ENCODE measurements at regions of chr10 and their contacts with region 1.

Region 1: GRCh38 chr10:17228091-17228940 is at the start of gene VIM:
- DNase-seq: peak; percentile 92
- ATAC-seq: peak; percentile 81
- total RNA-seq, gene VIM: 447 TPM

Region 2: DNA sequence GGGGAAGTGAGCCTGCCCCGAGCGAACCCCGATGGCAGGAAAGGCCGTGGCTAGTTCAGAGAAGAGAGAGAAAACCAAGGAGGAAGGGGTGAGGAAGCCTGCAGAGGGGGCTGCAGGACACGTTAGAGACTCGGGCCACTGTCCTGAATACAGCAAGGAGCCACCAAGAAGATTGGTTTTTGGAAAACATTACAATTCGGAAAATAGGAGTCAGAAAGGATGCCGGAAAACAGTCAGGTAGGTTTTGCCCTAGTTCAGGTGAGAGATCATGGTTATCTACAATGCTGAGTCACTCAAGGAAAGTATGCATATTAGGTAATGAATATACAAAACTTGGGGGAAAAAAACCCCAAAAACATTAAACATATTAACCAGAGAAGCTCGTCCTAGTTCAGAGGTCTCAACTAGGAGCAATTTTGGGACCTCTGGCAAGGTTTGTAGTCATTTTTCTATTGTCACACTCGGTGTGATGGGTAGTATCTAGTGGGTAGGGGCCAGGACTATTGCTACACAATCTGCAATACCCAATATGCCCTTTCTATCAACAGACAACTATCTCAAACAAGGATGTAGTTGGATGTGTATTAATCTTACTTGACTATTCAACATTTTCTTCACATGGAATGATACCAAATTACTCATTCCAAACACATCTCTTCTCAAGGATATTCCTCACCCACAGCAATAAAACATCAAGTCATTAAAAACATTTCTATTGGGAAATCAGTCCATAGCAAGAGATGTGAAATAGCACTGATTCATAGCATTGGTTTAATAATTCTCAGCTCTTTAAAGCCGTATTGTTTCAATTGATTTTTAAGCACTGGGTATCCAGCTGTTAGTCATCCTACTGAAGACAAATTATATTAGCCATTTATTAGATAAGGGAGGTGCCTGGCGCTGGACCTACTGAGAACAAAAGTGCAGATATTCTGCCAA is 336.7 kb before region 1 on chr10:
- intact Hi-C with region 1: loop called (anchors 2 kb)
- DNase-seq: peak; percentile 78
- ATAC-seq: peak; percentile 96

Region 3: DNA sequence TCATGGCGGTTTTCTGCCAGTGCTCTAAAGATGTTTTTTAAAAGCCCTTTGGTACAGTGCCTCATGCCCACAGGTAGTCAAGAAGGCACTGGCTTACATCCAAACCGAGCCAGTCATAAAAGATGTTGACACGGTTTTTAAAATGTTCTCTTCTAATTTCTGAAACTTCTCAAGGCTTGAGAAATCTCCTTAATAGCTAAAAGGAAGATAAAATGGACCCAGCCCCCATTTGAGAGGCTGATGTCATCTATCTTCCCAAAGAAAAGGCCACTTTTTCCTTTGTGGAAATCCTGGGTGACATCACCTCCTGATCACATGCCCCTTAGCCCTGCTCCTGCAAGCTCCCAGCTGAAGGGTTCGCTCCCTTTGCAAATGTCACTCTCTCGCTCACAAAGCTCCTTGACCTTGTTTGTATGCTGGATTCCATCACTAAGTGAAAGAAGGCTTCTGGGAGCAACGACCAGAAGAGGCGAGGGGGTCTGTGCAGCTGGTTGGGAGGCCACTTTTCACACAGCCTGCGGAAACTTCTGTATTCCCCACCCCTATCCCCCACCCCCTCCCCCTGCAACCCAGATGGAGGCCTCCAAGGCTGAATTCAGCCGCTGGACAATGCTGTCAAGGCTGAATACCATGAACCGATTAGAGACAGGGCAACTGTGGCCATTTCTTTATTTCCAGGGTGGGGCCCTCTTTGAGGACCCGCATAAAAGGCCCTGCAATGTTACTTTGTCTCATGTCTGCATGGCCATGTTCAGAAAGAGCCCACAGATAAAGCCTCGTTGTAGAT is 221.5 kb before region 1 on chr10:
- intact Hi-C with region 1: loop called (anchors 5 kb)
- DNase-seq: no peak
- ATAC-seq: no peak

Region 4: GRCh38 chr10:17029581-17030271 is 198.6 kb before region 1 on chr10:
- intact Hi-C with region 1: loop called (anchors 5 kb)
- DNase-seq: peak; percentile 87
- ATAC-seq: peak; percentile 90

Region 5: DNA sequence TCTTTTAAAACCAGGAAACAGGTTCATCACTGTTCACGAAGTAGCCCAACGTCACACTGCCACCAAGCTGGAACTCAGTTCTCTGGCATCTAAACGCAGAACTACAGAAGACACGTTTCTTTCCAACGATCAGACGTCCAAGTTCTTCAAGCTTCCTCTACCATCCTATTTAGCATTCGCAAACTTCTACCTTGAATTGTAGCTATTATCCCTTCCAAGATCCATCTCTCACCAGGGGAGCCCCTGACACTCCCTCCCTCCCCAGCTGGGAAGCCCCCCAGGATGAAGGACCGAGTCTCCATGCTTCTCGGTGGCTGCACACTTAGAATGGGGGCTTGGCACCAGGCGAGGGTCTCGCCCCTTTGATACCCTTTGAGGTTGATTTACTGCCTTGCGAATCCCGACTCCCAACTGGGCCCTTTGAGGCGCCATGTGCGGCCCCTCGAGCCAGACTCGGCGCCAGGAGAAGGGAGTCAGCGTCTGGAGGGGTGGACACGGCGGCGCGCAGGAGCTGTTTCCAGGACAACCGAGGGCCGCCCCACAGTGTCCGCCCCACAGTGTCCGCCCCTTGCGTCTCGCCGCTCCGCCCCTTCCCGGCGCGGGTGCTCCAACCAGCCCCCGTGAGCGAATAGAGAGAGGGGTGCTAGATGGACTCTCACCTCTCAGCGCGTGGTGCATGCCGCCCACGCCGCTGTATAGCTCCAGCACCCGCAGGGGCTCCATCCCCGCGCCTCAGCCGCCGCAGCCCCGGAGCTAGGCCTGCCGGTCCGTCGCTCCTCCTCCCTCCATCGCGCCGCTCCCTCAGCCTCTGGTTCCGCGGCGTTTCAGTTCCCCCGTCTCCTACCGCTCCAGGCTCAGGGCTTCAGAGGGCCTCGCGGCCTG is 27.2 kb before region 1 on chr10 and contains the start of gene TRDMT1:
- intact Hi-C with region 1: loop called (anchors 2 kb)
- DNase-seq: peak; percentile 94
- ATAC-seq: peak; percentile 100
- total RNA-seq, gene TRDMT1: 4.5 TPM